GM12878 (cell line): ENCODE measurements at regions of chr4 and their contacts with region 1.

Region 1: GRCh38 chr4:184263910-184264732 is 46.4 kb upstream of the ENPP6 start:
- DNase-seq: no peak
- ATAC-seq: peak; percentile 45
- H3K4me3 ChIP-seq: peak overlapping the region; percentile 63
- H3K27ac ChIP-seq: peak overlapping the region; percentile 72
- H3K4me1 ChIP-seq: peaks cover 39% of the 10 kb centered on the region
- H3K27me3 ChIP-seq: no peaks in the 10 kb centered on the region
- CTCF ChIP-seq: peak; percentile 67 to 89 (median 86)
- EP300 ChIP-seq: no peak
- POLR2A ChIP-seq: 0 out of 2 replicates have a peak, but pooled peaks have one; percentile 37
- RAD21 ChIP-seq: peak; percentile 91

Region 2: DNA sequence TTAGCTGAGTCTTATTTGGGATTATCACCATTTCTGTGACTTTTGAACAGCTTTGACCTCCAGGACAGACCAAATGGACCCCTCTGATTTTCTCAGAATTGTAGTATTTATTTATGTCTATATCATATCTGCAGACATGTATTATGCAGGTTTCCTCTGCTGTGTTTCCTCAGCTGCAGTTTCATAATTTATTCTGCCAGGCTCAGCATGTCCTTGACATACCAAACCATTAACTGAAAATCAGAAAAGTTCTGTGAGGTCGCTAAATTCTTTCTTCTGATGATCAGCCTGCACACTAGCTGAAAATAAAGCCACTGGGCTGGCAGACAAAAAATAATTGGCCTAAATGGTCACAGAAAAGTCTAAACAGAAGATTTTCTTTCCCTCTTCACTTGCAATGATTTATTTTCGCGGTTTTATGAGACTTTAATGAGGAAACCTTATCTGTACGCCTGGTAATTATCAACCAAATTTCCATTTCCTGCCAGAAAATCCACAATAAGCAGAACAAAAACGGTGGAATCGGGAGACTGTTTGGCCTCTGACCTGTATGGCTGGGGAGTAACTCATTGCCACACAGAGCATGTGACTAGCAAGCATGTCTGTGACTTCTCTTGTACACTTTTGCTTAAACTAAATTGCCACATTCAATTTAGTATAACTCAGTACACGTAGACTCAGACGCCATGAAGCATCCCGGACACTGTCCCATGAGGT is 197.4 kb before region 1 on chr4:
- CTCF ChIA-PET with region 1: no interaction called
- POLR2A ChIA-PET with region 1: no interaction called
- RAD21 ChIA-PET with region 1: no interaction called
- SMC1A ChIA-PET with region 1: no interaction called
- in situ Hi-C with region 1: no loop called
- intact Hi-C with region 1: no loop called
- DNase-seq: no peak
- ATAC-seq: no peak
- H3K4me3 ChIP-seq: no peak overlapping the region
- H3K27ac ChIP-seq: no peak overlapping the region
- H3K4me1 ChIP-seq: no peaks in the 10 kb centered on the region
- H3K27me3 ChIP-seq: no peaks in the 10 kb centered on the region; a peak in 2 of 4 replicates
- CTCF ChIP-seq: no peak
- EP300 ChIP-seq: no peak
- POLR2A ChIP-seq: no peak
- RAD21 ChIP-seq: no peak

Region 3: GRCh38 chr4:184310171-184310567 is 46.0 kb after region 1 on chr4:
- CTCF ChIA-PET with region 1: interaction called, 68 read pairs
- POLR2A ChIA-PET with region 1: interaction called, 120 read pairs
- RAD21 ChIA-PET with region 1: interaction called, 253 read pairs
- SMC1A ChIA-PET with region 1: interaction called, 325 read pairs
- in situ Hi-C with region 1: no loop called
- intact Hi-C with region 1: loop called (anchors 1 kb)
- DNase-seq: no peak
- ATAC-seq: peak; percentile 61
- H3K4me3 ChIP-seq: peak overlapping the region; percentile 75; the same call in 1 of the 2 replicates
- H3K27ac ChIP-seq: peak overlapping the region; percentile 94
- H3K4me1 ChIP-seq: peaks cover 47% of the 10 kb centered on the region
- H3K27me3 ChIP-seq: no peaks in the 10 kb centered on the region
- CTCF ChIP-seq: peak; percentile 49 to 59 (median 49)
- EP300 ChIP-seq: no peak
- POLR2A ChIP-seq: peak; percentile 33; the same call in 1 of the 2 replicates
- RAD21 ChIP-seq: peak; percentile 65

Region 4: GRCh38 chr4:184349283-184350039 is 85.3 kb after region 1 on chr4:
- CTCF ChIA-PET with region 1: interaction called, 73 read pairs
- POLR2A ChIA-PET with region 1: interaction called, 227 read pairs
- RAD21 ChIA-PET with region 1: interaction called, 253 read pairs
- SMC1A ChIA-PET with region 1: interaction called, 305 read pairs
- in situ Hi-C with region 1: no loop called
- intact Hi-C with region 1: loop called (anchors 1 kb)
- DNase-seq: no peak
- ATAC-seq: no peak
- H3K4me3 ChIP-seq: peak overlapping the region; percentile 89
- H3K27ac ChIP-seq: peak overlapping the region; percentile 99
- H3K4me1 ChIP-seq: peaks cover 50% of the 10 kb centered on the region
- H3K27me3 ChIP-seq: no peaks in the 10 kb centered on the region
- CTCF ChIP-seq: no peak
- EP300 ChIP-seq: no peak
- POLR2A ChIP-seq: no peak
- RAD21 ChIP-seq: no peak

Region 5: GRCh38 chr4:184417802-184418511 is 153.8 kb after region 1 on chr4:
- CTCF ChIA-PET with region 1: interaction called, 10 read pairs
- POLR2A ChIA-PET with region 1: interaction called, 4 read pairs
- RAD21 ChIA-PET with region 1: interaction called, 29 read pairs
- SMC1A ChIA-PET with region 1: interaction called, 28 read pairs
- in situ Hi-C with region 1: no loop called
- intact Hi-C with region 1: loop called (anchors 1 kb)
- DNase-seq: peak; percentile 78
- ATAC-seq: peak; percentile 72
- H3K4me3 ChIP-seq: no peak overlapping the region
- H3K27ac ChIP-seq: peak overlapping the region; percentile 90
- H3K4me1 ChIP-seq: peaks cover 64% of the 10 kb centered on the region
- H3K27me3 ChIP-seq: no peaks in the 10 kb centered on the region
- CTCF ChIP-seq: no peak
- EP300 ChIP-seq: peak in 1 of 2 experiments; percentile 75; a peak in 1 of 4 replicates
- POLR2A ChIP-seq: 0 out of 2 replicates have a peak, but pooled peaks have one; percentile 23
- RAD21 ChIP-seq: no peak

Region 6: DNA sequence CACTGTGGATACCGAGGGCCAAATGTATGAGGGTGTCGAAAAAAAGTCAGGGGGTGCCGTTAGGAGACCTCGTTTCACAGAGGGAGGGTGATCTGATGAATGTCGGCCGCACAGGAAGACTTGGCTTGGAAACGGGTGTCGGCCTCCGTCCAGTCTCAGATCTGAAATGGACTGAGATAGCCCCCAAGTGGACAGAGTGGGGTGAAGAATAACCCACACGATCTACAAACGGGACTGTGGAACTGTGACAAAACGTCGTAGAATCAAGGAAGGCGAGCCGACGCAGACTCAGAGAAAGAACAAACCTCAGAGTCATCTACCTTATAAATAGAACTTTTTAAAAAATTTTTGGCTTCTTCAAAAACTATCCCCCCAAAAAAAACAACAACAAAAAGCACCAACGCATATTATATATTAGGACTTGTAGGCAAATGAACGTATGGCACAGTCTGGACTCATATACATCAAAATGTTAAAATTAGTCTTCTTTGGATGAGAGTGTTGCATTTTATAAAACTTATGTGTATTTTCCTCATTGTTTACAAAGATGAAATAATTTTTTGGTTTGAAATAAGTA is 274.0 kb after region 1 on chr4:
- CTCF ChIA-PET with region 1: interaction called, 64 read pairs
- POLR2A ChIA-PET with region 1: interaction called, 53 read pairs
- RAD21 ChIA-PET with region 1: interaction called, 110 read pairs
- SMC1A ChIA-PET with region 1: interaction called, 144 read pairs
- in situ Hi-C with region 1: no loop called
- intact Hi-C with region 1: loop called (anchors 1 kb)
- DNase-seq: peak; percentile 83
- ATAC-seq: peak; percentile 87
- H3K4me3 ChIP-seq: peak overlapping the region; percentile 88
- H3K27ac ChIP-seq: peak overlapping the region; percentile 86
- H3K4me1 ChIP-seq: peaks cover 23% of the 10 kb centered on the region
- H3K27me3 ChIP-seq: no peaks in the 10 kb centered on the region
- CTCF ChIP-seq: peak; percentile 61 to 79 (median 69)
- EP300 ChIP-seq: no peak
- POLR2A ChIP-seq: no peak
- RAD21 ChIP-seq: peak; percentile 96

Region 7: GRCh38 chr4:184722798-184723197 is 458.7 kb after region 1 on chr4:
- CTCF ChIA-PET with region 1: interaction called, 11 read pairs
- POLR2A ChIA-PET with region 1: no interaction called
- RAD21 ChIA-PET with region 1: interaction called, 3 read pairs
- SMC1A ChIA-PET with region 1: no interaction called
- in situ Hi-C with region 1: no loop called
- intact Hi-C with region 1: no loop called
- DNase-seq: no peak
- ATAC-seq: peak; percentile 60
- H3K4me3 ChIP-seq: no peak overlapping the region
- H3K27ac ChIP-seq: no peak overlapping the region
- H3K4me1 ChIP-seq: no peaks in the 10 kb centered on the region; the same call in 1 of the 2 replicates
- H3K27me3 ChIP-seq: no peaks in the 10 kb centered on the region
- CTCF ChIP-seq: peak in 2 of 3 experiments; percentile 18 to 19; a peak in 2 of 6 replicates
- EP300 ChIP-seq: no peak
- POLR2A ChIP-seq: no peak
- RAD21 ChIP-seq: no peak